Naive thymus-derived CD4-positive, alpha-beta T cell (primary cell): ENCODE measurements at regions of chr6 and their contacts with region 1.

Region 1: GRCh38 chr6:30102970-30103874 is 9.7 kb downstream of the TRIM31 start:
- DNase-seq: peak; percentile 61 to 87 (median 83)
- ATAC-seq: peak; percentile 92
- H3K4me3 ChIP-seq: peak overlapping the region; percentile 68
- H3K4me3 Mint-ChIP-seq: peak overlapping the region; percentile 86 to 95 (median 91)
- H3K27ac ChIP-seq: peak overlapping the region; percentile 49
- H3K27ac Mint-ChIP-seq: peak overlapping the region; percentile 48 to 92 (median 85)
- H3K4me1 ChIP-seq: peaks cover 24 to 30% of the 10 kb centered on the region in 2 donors
- H3K4me1 Mint-ChIP-seq: peaks cover 36 to 51% (median 43%) of the 10 kb centered on the region in 7 donors
- H3K27me3 ChIP-seq: peaks cover 5 to 10% of the 10 kb centered on the region in 2 donors
- H3K27me3 Mint-ChIP-seq: peaks cover 25 to 69% (median 34%) of the 10 kb centered on the region in 5 donors

Region 2: GRCh38 chr6:28782113-28782673 is 1321.0 kb before region 1 on chr6:
- CTCF ChIA-PET with region 1: no interaction called
- POLR2A ChIA-PET with region 1: no interaction called
- intact Hi-C with region 1: no loop called
- DNase-seq: no peak
- ATAC-seq: no peak
- H3K4me3 ChIP-seq: no peak overlapping the region
- H3K4me3 Mint-ChIP-seq: peak overlapping the region in 1 of 10 donors; percentile 45
- H3K27ac ChIP-seq: no peak overlapping the region
- H3K27ac Mint-ChIP-seq: peak overlapping the region in 2 of 9 donors; percentile 34 to 42
- H3K4me1 ChIP-seq: peaks cover 0 to 4% of the 10 kb centered on the region in 2 donors
- H3K4me1 Mint-ChIP-seq: peaks cover 0 to 10% (median 6%) of the 10 kb centered on the region in 7 donors
- H3K27me3 ChIP-seq: peaks cover 21 to 60% of the 10 kb centered on the region in 2 donors
- H3K27me3 Mint-ChIP-seq: peaks cover 89 to 96% (median 92%) of the 10 kb centered on the region in 5 donors

Region 3: DNA sequence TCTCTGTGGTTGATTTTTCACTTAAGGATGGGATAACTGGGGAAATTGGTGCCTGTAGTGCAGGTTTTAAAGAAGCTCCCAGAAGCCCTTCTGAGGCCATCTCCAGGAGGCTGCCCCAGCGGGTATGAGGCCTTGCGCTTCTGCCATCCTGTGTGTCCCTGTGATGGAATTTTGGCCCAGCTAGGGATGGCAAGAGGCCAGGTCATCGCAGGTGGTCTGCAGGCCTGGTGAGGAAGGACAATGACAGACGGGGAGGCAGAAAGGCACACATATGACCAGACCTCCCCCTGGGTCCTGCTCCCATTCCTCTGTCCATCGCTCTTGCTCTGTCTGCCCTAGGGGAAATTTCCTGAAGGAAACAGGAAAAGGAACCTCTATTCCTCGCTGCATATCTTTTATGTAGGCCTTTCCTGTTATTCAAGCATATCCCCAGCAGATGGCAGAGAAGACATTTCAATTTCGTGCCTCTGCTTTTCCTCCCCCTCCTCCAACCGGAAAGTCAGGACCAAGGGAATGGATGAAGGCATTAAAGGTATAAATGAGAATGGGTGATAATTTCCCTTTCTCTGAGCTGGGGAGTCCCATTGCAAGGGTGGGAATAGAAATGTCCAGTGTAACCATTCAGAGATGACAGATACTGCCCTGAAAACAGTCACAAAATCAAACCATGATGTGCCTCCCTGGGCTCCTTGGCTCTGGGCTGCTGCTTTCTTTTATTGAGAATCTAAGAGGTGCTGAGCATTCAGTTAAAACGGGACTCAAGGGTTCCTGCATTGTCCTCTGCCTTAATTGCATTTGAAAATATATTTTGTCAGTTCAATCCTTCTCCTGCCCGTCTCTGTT is 397.6 kb before region 1 on chr6:
- CTCF ChIA-PET with region 1: no interaction called
- POLR2A ChIA-PET with region 1: no interaction called
- intact Hi-C with region 1: no loop called
- DNase-seq: peak in 4 of 9 donors; percentile 41 to 60 (median 43)
- ATAC-seq: no peak
- H3K4me3 ChIP-seq: no peak overlapping the region
- H3K4me3 Mint-ChIP-seq: peak overlapping the region in 6 of 10 donors; percentile 20 to 77 (median 42)
- H3K27ac ChIP-seq: peak overlapping the region; percentile 2
- H3K27ac Mint-ChIP-seq: peak overlapping the region in 8 of 9 donors; percentile 16 to 95 (median 82)
- H3K4me1 ChIP-seq: peaks cover 47 to 54% of the 10 kb centered on the region in 2 donors
- H3K4me1 Mint-ChIP-seq: peaks cover 21 to 59% (median 51%) of the 10 kb centered on the region in 7 donors
- H3K27me3 ChIP-seq: no peaks in the 10 kb centered on the region
- H3K27me3 Mint-ChIP-seq: peaks cover 4 to 37% (median 8%) of the 10 kb centered on the region in 5 donors

Region 4: GRCh38 chr6:30061092-30061857 is 41.9 kb before region 1 on chr6 and contains the start of gene POLR1H:
- CTCF ChIA-PET with region 1: interaction called, 14 read pairs
- POLR2A ChIA-PET with region 1: interaction called, 36 read pairs
- intact Hi-C with region 1: loop called in 1 of 2 experiments (anchors 1 kb)
- DNase-seq: peak; percentile 69 to 93 (median 86)
- ATAC-seq: peak; percentile 93
- H3K4me3 ChIP-seq: peak within 1 kb of the TSS; percentile 95
- H3K4me3 Mint-ChIP-seq: peak within 1 kb of the TSS; percentile 93 to 99 (median 98)
- H3K27ac ChIP-seq: peak within 1 kb of the TSS; percentile 92
- H3K27ac Mint-ChIP-seq: peak within 1 kb of the TSS; percentile 95 to 99 (median 99)
- H3K4me1 ChIP-seq: peaks cover 24 to 26% of the 10 kb centered on the region in 2 donors
- H3K4me1 Mint-ChIP-seq: peaks cover 17 to 63% (median 55%) of the 10 kb centered on the region in 7 donors
- H3K27me3 ChIP-seq: no peaks in the 10 kb centered on the region
- H3K27me3 Mint-ChIP-seq: no peaks in the 10 kb centered on the region
- total RNA-seq, gene POLR1H: 27.3 to 66.8 (median 45.0) TPM

Region 5: GRCh38 chr6:30092852-30093543 is 10.2 kb before region 1 on chr6:
- CTCF ChIA-PET with region 1: interaction called, 11 read pairs
- POLR2A ChIA-PET with region 1: interaction called, 4 read pairs
- intact Hi-C with region 1: no loop called
- DNase-seq: no peak
- ATAC-seq: no peak
- H3K4me3 ChIP-seq: no peak overlapping the region
- H3K4me3 Mint-ChIP-seq: no peak overlapping the region
- H3K27ac ChIP-seq: no peak overlapping the region
- H3K27ac Mint-ChIP-seq: no peak overlapping the region
- H3K4me1 ChIP-seq: peaks cover 0 to 9% of the 10 kb centered on the region in 2 donors
- H3K4me1 Mint-ChIP-seq: peaks cover 4 to 17% (median 12%) of the 10 kb centered on the region in 7 donors
- H3K27me3 ChIP-seq: peaks cover 0 to 8% of the 10 kb centered on the region in 2 donors
- H3K27me3 Mint-ChIP-seq: peaks cover 34 to 81% (median 54%) of the 10 kb centered on the region in 5 donors

Region 6: GRCh38 chr6:30169658-30170614 is 66.7 kb after region 1 on chr6:
- CTCF ChIA-PET with region 1: interaction called, 9 read pairs
- POLR2A ChIA-PET with region 1: no interaction called
- intact Hi-C with region 1: loop called (anchors 1 kb)
- DNase-seq: peak in 5 of 9 donors; percentile 23 to 44 (median 34)
- ATAC-seq: peak; percentile 81
- H3K4me3 ChIP-seq: no peak overlapping the region
- H3K4me3 Mint-ChIP-seq: no peak overlapping the region
- H3K27ac ChIP-seq: no peak overlapping the region
- H3K27ac Mint-ChIP-seq: no peak overlapping the region
- H3K4me1 ChIP-seq: peaks cover 0 to 3% of the 10 kb centered on the region in 2 donors
- H3K4me1 Mint-ChIP-seq: peaks cover 0 to 37% (median 4%) of the 10 kb centered on the region in 7 donors
- H3K27me3 ChIP-seq: peaks cover 9 to 12% of the 10 kb centered on the region in 2 donors
- H3K27me3 Mint-ChIP-seq: peaks cover 42 to 65% (median 57%) of the 10 kb centered on the region in 5 donors

Region 7: GRCh38 chr6:30259140-30260035 is 156.2 kb after region 1 on chr6:
- CTCF ChIA-PET with region 1: no interaction called
- POLR2A ChIA-PET with region 1: no interaction called
- intact Hi-C with region 1: loop called in 1 of 2 experiments (anchors 2 kb)
- DNase-seq: peak; percentile 42 to 68 (median 53)
- ATAC-seq: peak; percentile 93
- H3K4me3 ChIP-seq: peak overlapping the region; percentile 79
- H3K4me3 Mint-ChIP-seq: peak overlapping the region; percentile 78 to 97 (median 90)
- H3K27ac ChIP-seq: peak overlapping the region; percentile 78
- H3K27ac Mint-ChIP-seq: peak overlapping the region in 8 of 9 donors; percentile 65 to 91 (median 78)
- H3K4me1 ChIP-seq: peaks cover 5 to 6% of the 10 kb centered on the region in 2 donors
- H3K4me1 Mint-ChIP-seq: peaks cover 7 to 17% (median 13%) of the 10 kb centered on the region in 7 donors
- H3K27me3 ChIP-seq: no peaks in the 10 kb centered on the region
- H3K27me3 Mint-ChIP-seq: peaks cover 0 to 35% (median 0%) of the 10 kb centered on the region in 5 donors

Region 8: DNA sequence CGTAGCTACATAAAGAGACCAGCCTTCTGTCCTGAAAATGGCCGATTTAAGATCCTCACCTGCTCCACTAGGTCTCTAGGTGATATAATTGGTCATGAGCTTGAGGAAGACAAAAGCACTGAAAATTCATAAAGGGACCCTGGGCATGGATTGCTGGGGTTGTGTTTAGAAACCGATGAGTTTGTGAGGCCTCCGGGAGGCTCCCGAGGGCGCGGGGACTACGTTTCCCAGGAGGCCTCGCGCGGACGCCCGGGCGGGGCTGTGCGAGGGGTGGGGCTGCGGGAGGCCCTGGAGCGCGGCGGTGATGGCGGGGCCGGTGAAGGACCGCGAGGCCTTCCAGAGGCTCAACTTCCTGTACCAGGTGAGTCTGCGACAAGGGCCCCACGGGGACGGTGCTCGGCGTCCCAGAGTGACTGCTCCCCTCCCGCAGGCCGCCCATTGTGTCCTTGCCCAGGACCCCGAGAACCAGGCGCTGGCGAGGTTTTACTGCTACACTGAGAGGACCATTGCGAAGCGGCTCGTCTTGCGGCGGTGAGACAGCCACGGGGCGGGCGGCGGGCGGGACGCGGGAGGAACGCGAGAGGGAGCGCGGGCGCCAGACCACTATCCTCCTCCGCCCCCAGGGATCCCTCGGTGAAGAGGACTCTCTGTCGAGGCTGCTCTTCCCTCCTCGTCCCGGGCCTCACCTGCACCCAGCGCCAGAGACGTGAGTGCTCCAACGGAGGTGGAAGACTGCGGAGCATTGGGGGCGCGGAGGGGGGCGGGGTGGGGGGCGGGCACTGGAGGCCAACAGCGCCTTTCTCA is 241.8 kb after region 1 on chr6 and contains the start of gene RPP21:
- CTCF ChIA-PET with region 1: no interaction called
- POLR2A ChIA-PET with region 1: no interaction called
- intact Hi-C with region 1: loop called in 1 of 2 experiments (anchors 1 kb)
- DNase-seq: peak; percentile 74 to 91 (median 86)
- ATAC-seq: peak; percentile 99
- H3K4me3 ChIP-seq: peak within 1 kb of the TSS; percentile 77
- H3K4me3 Mint-ChIP-seq: peak within 1 kb of the TSS; percentile 81 to 94 (median 89)
- H3K27ac ChIP-seq: peak within 1 kb of the TSS; percentile 97
- H3K27ac Mint-ChIP-seq: peak within 1 kb of the TSS; percentile 84 to 97 (median 92)
- H3K4me1 ChIP-seq: peaks cover 0 to 12% of the 10 kb centered on the region in 2 donors
- H3K4me1 Mint-ChIP-seq: peaks cover 12 to 32% (median 24%) of the 10 kb centered on the region in 7 donors
- H3K27me3 ChIP-seq: no peaks in the 10 kb centered on the region
- H3K27me3 Mint-ChIP-seq: peaks cover 0 to 7% (median 0%) of the 10 kb centered on the region in 5 donors
- total RNA-seq, gene RPP21: 39.7 to 61.2 (median 44.9) TPM